ENCODE measurements at regions of chr6 and their contacts with region 1.

Region 1: DNA sequence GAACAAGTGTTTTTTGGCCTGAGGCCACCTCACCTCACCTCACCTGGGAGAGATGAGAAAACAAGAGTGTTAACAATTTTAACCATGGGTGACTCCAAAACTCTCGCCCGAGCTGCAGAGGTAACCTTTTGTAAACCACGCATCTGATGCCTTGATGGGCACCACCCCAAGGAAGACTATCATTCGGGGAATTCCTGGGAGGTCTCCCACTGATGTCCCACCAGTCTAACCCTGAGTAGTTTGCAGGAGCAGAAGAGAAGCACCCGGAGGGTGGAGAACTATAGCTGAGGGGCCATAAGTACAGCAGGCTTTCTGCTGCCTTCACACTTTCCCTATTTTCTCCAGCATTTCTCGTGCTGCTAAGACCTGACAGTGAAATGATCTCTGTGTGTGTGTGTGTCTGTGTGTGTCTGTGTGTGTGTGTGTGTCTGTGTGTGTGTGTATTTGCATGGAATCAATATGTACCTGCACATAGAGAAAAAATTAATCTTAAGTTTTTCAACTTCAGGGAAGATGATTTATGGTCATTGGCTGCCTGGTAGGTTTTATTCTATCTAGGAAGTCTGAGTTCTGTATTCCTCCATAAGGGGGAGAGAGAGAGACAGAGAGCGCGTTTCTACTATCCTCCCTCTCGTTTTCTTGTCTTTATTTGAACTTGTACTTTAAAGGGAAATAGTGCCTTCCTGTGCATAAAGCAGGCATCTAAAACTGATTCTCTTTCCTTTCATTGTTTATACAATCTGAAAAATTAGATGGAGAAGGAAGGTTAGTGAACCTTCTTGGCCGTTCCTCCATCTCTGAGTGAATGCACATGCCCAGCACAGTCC is 75.8 kb downstream of the CAP2 start:
- DNase-seq: no peak
- ATAC-seq: peak in 1 of 2 donors; percentile 26
- H3K4me3 ChIP-seq: no peak overlapping the region
- H3K27ac ChIP-seq: peak overlapping the region; percentile 83 to 98 (median 93)
- H3K4me1 ChIP-seq: peaks cover 61 to 72% of the 10 kb centered on the region in 2 donors
- H3K27me3 ChIP-seq: no peaks in the 10 kb centered on the region
- CTCF ChIP-seq: peak; percentile 38 to 54 (median 42)
- POLR2A ChIP-seq: no peak

Region 2: DNA sequence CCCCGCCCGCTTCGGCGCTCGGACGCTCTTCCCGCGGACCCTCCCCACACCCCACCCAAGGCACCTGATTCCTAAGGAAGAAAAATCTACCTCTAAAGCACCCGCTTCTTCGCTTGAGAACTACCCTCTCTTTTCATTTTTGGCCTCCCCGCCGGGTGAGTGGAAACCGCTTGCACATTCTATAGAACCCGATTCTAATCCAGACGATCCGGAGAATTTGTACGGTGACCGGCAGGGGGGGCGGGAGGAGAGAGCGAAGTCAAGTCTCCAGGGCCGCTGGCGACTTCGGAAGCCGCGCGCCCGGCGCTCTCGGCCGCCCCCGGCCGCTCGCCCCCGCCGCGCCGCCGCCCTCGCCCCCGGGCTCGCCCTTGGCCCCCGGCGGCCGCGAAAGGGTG is 188.1 kb before region 1 on chr6 and contains the start of gene RBM24:
- in situ Hi-C with region 1: loop called in 1 of 4 experiments (anchors 10 kb)
- intact Hi-C with region 1: loop called (anchors 5 kb)
- DNase-seq: peak in 1 of 2 donors; percentile 64
- ATAC-seq: peak; percentile 17 to 22
- H3K4me3 ChIP-seq: peak within 1 kb of the TSS; percentile 74 to 94 (median 86)
- H3K27ac ChIP-seq: peak within 1 kb of the TSS; percentile 93 to 100 (median 96)
- H3K4me1 ChIP-seq: peaks cover 26 to 46% of the 10 kb centered on the region in 2 donors
- H3K27me3 ChIP-seq: no peaks in the 10 kb centered on the region
- CTCF ChIP-seq: peak in 2 of 5 experiments; percentile 17 to 18
- POLR2A ChIP-seq: no peak
- total RNA-seq, gene RBM24: 74.9 to 375 (median 185) TPM

Region 3: DNA sequence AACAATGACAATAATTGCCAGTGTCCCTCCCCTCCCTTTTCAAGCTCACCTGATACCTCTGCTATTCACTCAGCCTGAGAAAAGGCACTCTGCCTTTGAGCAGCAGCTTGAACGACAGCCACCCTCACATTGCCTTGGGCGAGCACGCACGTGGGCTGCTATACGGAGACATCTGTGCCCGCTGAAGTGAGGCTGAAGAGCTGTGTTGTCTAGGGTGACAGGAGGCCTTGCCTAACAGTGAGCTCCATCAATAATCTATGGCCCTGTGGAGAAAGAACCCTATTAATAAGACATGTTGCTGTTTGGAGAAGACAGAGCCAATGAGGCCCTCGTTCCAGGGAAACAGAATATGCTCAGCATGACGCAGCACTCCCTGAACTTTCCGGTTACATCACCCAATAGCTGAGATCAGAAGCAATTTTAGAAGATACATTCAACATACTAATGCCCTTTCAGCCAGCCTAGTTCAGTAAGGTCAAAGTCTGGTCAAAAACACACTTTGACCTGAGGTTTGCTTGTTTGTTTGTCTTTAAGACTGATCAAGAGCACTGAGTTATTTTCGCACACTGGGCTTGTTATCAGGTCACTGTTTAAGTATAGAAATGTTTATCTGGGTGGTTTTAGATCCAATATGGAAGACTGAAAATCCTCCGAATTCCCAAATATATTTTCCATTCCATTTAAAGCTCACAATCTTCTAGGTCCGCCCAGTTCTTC is 157.5 kb before region 1 on chr6:
- in situ Hi-C with region 1: no loop called
- intact Hi-C with region 1: loop called (anchors 5 kb)
- DNase-seq: peak; percentile 56 to 82
- ATAC-seq: peak; percentile 90 to 96
- H3K4me3 ChIP-seq: peak overlapping the region; percentile 24 to 45 (median 36)
- H3K27ac ChIP-seq: peak overlapping the region; percentile 88 to 97 (median 94)
- H3K4me1 ChIP-seq: peaks cover 9 to 16% of the 10 kb centered on the region in 2 donors
- H3K27me3 ChIP-seq: no peaks in the 10 kb centered on the region
- CTCF ChIP-seq: no peak
- POLR2A ChIP-seq: peak; percentile 76 to 77

Region 4: GRCh38 chr6:17429383-17430061 is 39.7 kb before region 1 on chr6:
- in situ Hi-C with region 1: no loop called
- intact Hi-C with region 1: loop called (anchors 1 kb)
- DNase-seq: peak; percentile 76 to 81
- ATAC-seq: peak; percentile 85 to 86
- H3K4me3 ChIP-seq: no peak overlapping the region
- H3K27ac ChIP-seq: peak overlapping the region; percentile 96 to 98 (median 96)
- H3K4me1 ChIP-seq: peaks cover 48 to 52% of the 10 kb centered on the region in 2 donors
- H3K27me3 ChIP-seq: no peaks in the 10 kb centered on the region
- CTCF ChIP-seq: no peak
- POLR2A ChIP-seq: peak; percentile 73 to 87

Measured in gastrocnemius medialis (tissue), 4 donors.